Esophagus squamous epithelium (tissue), 5 donors: ENCODE measurements at regions of chr11 and their contacts with region 1.

Region 1: GRCh38 chr11:73564903-73565302 is 33.0 kb downstream of the FAM168A start:
- DNase-seq: no peak
- H3K4me3 ChIP-seq: no peak overlapping the region
- H3K27ac ChIP-seq: no peak overlapping the region
- H3K4me1 ChIP-seq: peaks cover 0 to under 1% (median 0%) of the 10 kb centered on the region in 3 donors
- H3K27me3 ChIP-seq: no peaks in the 10 kb centered on the region
- CTCF ChIP-seq: no peak
- POLR2A ChIP-seq: no peak

Region 2: GRCh38 chr11:73528483-73529203 is 36.3 kb before region 1 on chr11:
- intact Hi-C with region 1: loop called (anchors 5 kb)
- DNase-seq: no peak
- H3K4me3 ChIP-seq: peak overlapping the region; percentile 4 to 53 (median 24)
- H3K27ac ChIP-seq: peak overlapping the region in 2 of 4 donors; percentile 21 to 51
- H3K4me1 ChIP-seq: peaks cover 4 to 47% (median 15%) of the 10 kb centered on the region in 3 donors
- H3K27me3 ChIP-seq: no peaks in the 10 kb centered on the region
- CTCF ChIP-seq: no peak
- POLR2A ChIP-seq: no peak